CD8-positive, alpha-beta T cell (primary cell): ENCODE measurements at regions of chr17 and their contacts with region 1.

Region 1: GRCh38 chr17:75261336-75262111 is at the starts of genes GGA3 and MRPS7:
- DNase-seq: peak; percentile 93 to 98 (median 96)
- ATAC-seq: peak; percentile 94
- H3K4me3 ChIP-seq: peak within 1 kb of the TSS; percentile 89 to 97
- H3K4me3 Mint-ChIP-seq: peak within 1 kb of the TSS; percentile 99
- H3K27ac ChIP-seq: peak within 1 kb of the TSS; percentile 98 to 100
- H3K27ac Mint-ChIP-seq: peak within 1 kb of the TSS; percentile 100
- H3K4me1 ChIP-seq: peaks cover 27% of the 10 kb centered on the region
- H3K4me1 Mint-ChIP-seq: peaks cover 47% of the 10 kb centered on the region
- H3K27me3 ChIP-seq: no peaks in the 10 kb centered on the region
- H3K27me3 Mint-ChIP-seq: no peaks in the 10 kb centered on the region
- CTCF ChIP-seq: no peak
- total RNA-seq, gene GGA3: 103 to 107 TPM
- total RNA-seq, gene MRPS7: 42.0 to 43.9 TPM

Region 2: DNA sequence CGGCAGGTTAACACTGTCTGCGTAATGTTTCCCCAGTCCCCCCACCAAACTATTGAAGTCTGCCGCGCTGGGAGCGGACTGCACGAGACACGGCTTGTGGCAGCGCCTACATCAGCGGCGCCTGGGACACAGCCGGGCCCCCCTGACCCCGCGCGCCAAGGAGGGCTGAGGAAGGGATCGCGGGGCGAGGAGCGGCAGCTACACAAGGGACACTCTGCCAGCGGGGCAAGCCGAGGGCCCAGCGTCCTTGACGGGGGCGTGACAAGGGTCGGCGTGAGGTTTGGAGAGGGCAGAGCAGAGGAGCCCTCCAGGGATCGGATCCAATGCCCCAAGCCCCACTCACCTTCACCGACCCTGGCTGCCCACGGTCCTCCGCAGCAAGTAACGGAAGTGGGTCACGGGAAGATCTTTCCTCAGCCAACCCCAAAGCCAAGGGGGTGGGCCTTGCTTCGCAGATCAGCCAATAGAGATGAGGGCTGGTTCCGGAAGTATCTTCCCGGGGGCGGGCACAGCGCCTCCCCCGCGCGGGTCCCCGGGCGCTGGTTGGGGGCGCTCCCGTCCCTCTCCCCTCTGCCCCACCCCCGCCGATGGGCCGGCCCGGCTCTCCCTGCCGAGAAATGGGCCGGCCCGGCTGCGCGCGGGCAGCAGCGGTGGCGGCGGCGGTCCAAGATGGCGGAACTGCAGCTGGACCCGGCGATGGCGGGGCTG is 214.8 kb before region 1 on chr17 and contains the starts of genes ATP5PD and KCTD2:
- CTCF ChIA-PET with region 1: no interaction called
- POLR2A ChIA-PET with region 1: interaction called, 3 read pairs
- intact Hi-C with region 1: loop called in 1 of 2 experiments (anchors 10 kb)
- DNase-seq: peak; percentile 81 to 97 (median 93)
- ATAC-seq: peak; percentile 91
- H3K4me3 ChIP-seq: peak within 1 kb of the TSS; percentile 99
- H3K4me3 Mint-ChIP-seq: peak within 1 kb of the TSS; percentile 99
- H3K27ac ChIP-seq: peak within 1 kb of the TSS; percentile 93 to 97
- H3K27ac Mint-ChIP-seq: peak within 1 kb of the TSS; percentile 98
- H3K4me1 ChIP-seq: peaks cover 21% of the 10 kb centered on the region
- H3K4me1 Mint-ChIP-seq: peaks cover 54% of the 10 kb centered on the region
- H3K27me3 ChIP-seq: no peaks in the 10 kb centered on the region
- H3K27me3 Mint-ChIP-seq: no peaks in the 10 kb centered on the region
- CTCF ChIP-seq: no peak
- total RNA-seq, gene ATP5PD: 69.9 to 71.6 TPM
- total RNA-seq, gene KCTD2: 29.4 to 31.7 TPM

Region 3: DNA sequence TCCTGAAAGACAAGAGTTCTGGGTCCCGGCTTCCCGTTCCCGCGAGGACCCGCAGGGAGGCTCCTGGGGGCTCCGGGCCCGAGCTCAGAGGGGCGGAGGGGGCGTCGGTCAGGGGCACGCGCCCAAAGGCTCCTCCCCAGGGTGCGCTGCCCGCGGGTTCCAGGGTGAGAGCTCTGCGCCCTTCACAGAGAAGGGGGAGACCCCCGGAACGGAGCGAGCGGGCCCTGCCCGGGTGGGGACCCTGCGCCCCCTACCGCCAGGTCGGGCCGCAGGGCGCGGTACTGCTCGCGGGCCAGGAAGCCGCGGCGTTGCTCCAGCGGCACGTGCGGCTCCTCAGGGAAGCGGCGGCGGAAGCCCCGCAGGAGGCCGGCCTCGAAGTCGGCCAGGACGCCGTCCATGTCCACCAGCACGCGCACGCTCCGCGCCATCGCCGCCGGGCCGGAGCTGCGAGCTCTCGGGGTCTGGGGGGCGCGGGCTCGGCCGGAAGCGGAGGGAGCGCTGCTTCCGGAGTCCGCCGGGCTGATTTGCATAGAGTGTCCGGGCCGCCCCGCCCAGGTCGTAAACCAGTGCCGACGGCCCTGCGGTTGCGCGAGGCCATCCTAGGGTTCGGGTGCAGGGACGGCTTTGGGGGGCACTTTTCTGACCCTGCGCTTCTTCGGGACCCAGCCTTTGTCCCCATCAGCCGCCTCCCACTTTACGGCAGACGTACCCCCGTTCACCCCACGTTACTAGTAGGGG is 130.1 kb before region 1 on chr17 and contains the start of gene NT5C:
- CTCF ChIA-PET with region 1: no interaction called
- POLR2A ChIA-PET with region 1: no interaction called
- intact Hi-C with region 1: no loop called
- DNase-seq: peak in 8 of 9 experiments; percentile 43 to 82 (median 66)
- ATAC-seq: peak; percentile 79
- H3K4me3 ChIP-seq: peak within 1 kb of the TSS; percentile 80 to 84
- H3K4me3 Mint-ChIP-seq: peak within 1 kb of the TSS; percentile 86
- H3K27ac ChIP-seq: peak within 1 kb of the TSS; percentile 64 to 83
- H3K27ac Mint-ChIP-seq: peak within 1 kb of the TSS; percentile 77
- H3K4me1 ChIP-seq: peaks cover 8% of the 10 kb centered on the region
- H3K4me1 Mint-ChIP-seq: peaks cover 15% of the 10 kb centered on the region
- H3K27me3 ChIP-seq: no peaks in the 10 kb centered on the region
- H3K27me3 Mint-ChIP-seq: no peaks in the 10 kb centered on the region
- CTCF ChIP-seq: peak; percentile 19
- total RNA-seq, gene NT5C: 19.3 to 20.4 TPM

Region 4: DNA sequence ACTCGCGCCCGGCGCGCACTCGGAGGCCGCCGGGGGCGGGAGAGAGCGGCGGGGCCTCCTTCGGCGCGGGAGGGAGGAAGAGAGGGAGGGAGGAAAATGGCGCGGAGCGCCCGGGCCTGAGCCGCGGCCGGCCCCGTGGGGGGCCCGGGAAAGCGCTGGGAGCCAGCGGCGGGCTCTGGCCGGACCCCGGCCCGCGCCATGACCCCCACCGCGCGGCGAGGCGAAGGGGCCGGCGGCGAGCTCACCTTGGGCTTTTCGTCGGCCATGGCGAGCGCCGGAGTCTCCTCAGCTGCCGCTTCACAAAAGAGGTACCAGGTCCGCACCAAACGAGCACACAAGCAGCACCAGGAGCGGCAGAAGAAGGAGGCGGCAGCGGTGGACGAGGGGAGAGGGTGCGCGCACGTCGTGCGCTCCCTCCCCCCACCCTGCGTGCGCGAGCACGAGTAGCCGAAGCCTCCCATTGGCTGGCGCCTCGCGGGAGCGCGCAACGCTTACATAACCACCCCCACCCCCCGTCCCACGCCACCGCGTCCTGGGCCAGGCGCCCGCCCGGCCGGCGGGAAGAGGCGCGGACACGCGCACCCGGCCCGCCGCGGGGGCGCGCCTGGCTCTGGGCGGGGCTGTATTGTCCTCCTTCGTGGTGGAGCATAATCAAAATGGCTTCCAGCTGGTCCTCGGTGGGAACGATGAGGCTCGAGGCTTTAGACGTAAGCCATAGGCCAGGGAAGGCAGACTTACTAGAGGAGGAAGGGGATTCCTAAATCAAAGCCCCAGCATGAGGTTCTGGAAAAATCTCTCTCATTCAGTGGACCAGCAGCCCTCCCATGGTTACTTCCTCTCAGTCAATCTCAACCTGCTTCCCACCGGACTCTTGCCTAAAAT is 78.7 kb before region 1 on chr17 and contains the start of gene SUMO2:
- CTCF ChIA-PET with region 1: no interaction called
- POLR2A ChIA-PET with region 1: interaction called, 3 read pairs
- intact Hi-C with region 1: loop called (anchors 1 to 2 kb)
- DNase-seq: peak; percentile 89 to 98 (median 95)
- ATAC-seq: peak; percentile 77
- H3K4me3 ChIP-seq: peak within 1 kb of the TSS; percentile 68 to 82
- H3K4me3 Mint-ChIP-seq: peak within 1 kb of the TSS; percentile 92
- H3K27ac ChIP-seq: peak within 1 kb of the TSS; percentile 95
- H3K27ac Mint-ChIP-seq: peak within 1 kb of the TSS; percentile 98
- H3K4me1 ChIP-seq: peaks cover 28% of the 10 kb centered on the region
- H3K4me1 Mint-ChIP-seq: peaks cover 46% of the 10 kb centered on the region
- H3K27me3 ChIP-seq: no peaks in the 10 kb centered on the region
- H3K27me3 Mint-ChIP-seq: no peaks in the 10 kb centered on the region
- CTCF ChIP-seq: no peak
- total RNA-seq, gene SUMO2: 192 to 203 TPM

Region 5: DNA sequence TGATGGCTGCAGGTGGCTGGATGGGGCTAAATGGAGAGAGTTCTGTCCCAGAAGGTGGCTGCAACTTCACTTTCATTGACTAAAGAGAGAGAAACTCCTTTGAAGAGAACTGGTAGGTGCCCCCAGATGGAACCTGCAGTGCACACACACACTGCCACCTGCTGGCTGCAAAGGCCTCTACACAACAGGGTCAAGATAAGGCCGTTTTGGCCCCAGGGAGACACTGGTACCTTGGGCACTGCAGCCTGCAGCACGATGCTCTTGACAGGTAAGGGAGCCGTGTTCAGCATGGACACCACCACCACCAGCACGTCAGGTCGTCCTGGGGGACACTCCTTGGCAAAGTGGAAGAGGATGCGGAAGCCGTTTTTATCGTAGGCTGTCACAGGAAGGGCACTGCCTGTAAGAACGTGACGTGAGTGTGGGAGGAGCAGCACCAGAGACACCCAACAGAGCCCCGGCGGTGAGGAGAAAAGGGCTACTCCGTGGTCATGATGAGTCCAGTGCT is 22.8 kb before region 1 on chr17:
- CTCF ChIA-PET with region 1: interaction called, 6 read pairs
- POLR2A ChIA-PET with region 1: interaction called, 5 read pairs
- intact Hi-C with region 1: loop called in 1 of 2 experiments (anchors 2 kb)
- DNase-seq: peak; percentile 24 to 78 (median 63)
- ATAC-seq: peak; percentile 47
- H3K4me3 ChIP-seq: no peak overlapping the region
- H3K4me3 Mint-ChIP-seq: no peak overlapping the region
- H3K27ac ChIP-seq: no peak overlapping the region
- H3K27ac Mint-ChIP-seq: peak overlapping the region; percentile 58
- H3K4me1 ChIP-seq: peaks cover 6% of the 10 kb centered on the region
- H3K4me1 Mint-ChIP-seq: peaks cover 24% of the 10 kb centered on the region
- H3K27me3 ChIP-seq: no peaks in the 10 kb centered on the region
- H3K27me3 Mint-ChIP-seq: no peaks in the 10 kb centered on the region
- CTCF ChIP-seq: peak; percentile 86

Region 6: DNA sequence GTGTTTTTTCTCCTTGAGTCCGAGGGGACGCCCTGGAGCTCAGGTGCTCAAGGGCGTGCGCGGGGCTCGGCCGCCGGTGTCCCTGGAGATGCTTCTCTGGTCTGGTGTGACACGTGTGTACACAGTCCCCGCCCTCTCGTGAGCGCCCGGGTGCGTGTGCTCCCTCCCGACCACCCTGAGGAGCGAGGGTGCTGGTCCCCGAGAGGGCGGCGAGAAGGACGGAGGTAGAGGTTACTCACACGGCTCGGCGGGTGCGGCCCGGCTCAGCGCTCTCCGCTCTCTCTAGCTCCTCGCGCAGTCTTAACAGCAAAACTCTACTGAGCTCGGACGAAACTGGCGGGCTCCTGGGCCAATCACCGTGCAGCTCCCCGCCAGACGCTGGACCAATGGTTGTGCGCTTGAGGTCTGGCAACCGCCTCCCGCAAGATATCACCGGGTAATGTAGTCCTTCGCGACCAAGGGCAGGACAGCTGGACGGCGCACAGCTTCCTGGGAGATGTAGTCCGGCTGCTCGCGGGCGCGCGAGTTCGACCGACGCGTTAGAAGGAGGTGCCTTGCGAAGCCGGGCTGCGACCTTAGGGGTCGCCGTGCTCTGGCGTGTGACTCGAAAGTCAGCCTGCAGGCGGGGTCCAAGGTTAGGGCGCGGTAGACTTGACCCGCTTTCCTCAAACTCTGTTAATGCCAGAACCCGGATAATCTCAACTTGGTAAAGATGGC is 27.7 kb after region 1 on chr17 and contains the start of gene SLC25A19:
- CTCF ChIA-PET with region 1: interaction called, 6 read pairs
- POLR2A ChIA-PET with region 1: interaction called, 42 read pairs
- intact Hi-C with region 1: loop called in 1 of 2 experiments (anchors 1 kb)
- DNase-seq: peak; percentile 90 to 99 (median 96)
- ATAC-seq: peak; percentile 88
- H3K4me3 ChIP-seq: peak within 1 kb of the TSS; percentile 70 to 77
- H3K4me3 Mint-ChIP-seq: peak within 1 kb of the TSS; percentile 97
- H3K27ac ChIP-seq: peak within 1 kb of the TSS; percentile 95 to 97
- H3K27ac Mint-ChIP-seq: peak within 1 kb of the TSS; percentile 100
- H3K4me1 ChIP-seq: peaks cover 16% of the 10 kb centered on the region
- H3K4me1 Mint-ChIP-seq: peaks cover 16% of the 10 kb centered on the region
- H3K27me3 ChIP-seq: no peaks in the 10 kb centered on the region
- H3K27me3 Mint-ChIP-seq: no peaks in the 10 kb centered on the region
- CTCF ChIP-seq: no peak
- total RNA-seq, gene SLC25A19: 14.4 to 14.8 TPM

Region 7: DNA sequence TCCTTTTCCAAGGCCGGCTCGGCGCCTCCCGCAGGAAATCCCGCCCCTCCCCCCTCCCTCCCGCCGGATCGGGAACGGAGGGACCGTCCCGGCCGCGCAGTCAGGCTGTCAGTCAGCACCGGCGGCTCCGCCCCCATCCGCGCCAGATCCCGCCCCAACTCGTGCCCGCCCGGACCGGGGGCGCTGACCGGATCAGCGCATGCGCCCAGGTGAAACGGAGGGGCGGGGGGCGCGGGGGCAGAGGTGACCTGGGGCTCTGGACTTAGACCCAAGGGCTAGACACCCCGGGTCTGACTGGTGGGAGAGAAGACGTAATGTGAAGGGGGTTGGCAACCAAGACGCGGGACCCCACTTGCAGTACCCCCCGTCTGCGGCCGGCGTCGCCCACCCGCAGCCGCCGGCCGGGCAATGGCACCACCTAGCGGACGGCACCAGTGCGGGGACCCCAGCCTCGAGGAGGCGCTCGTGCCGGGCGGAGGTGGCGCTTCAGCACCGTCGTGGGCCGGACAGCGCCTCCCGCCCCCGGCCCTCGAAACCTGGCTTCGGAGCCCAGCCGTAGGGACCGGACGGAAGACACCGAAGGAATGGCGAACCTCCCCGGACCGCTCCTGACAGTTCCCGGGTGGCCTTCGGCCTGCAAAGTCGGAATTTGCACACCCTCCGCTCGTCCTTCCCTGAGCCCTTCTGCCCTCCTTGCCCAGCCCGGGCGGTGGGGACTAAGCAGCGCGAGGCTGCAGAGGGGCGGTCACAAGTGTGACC is 254.2 kb after region 1 on chr17 and contains the start of gene CASKIN2:
- CTCF ChIA-PET with region 1: interaction called, 3 read pairs
- POLR2A ChIA-PET with region 1: interaction called, 3 read pairs
- intact Hi-C with region 1: loop called in 1 of 2 experiments (anchors 1 kb)
- DNase-seq: peak; percentile 56 to 89 (median 80)
- ATAC-seq: peak; percentile 59
- H3K4me3 ChIP-seq: peak within 1 kb of the TSS; percentile 79 to 97
- H3K4me3 Mint-ChIP-seq: peak within 1 kb of the TSS; percentile 77
- H3K27ac ChIP-seq: peak within 1 kb of the TSS in 1 of 2 experiments; percentile 32
- H3K27ac Mint-ChIP-seq: no peak within 1 kb of the TSS
- H3K4me1 ChIP-seq: peaks cover 35% of the 10 kb centered on the region
- H3K4me1 Mint-ChIP-seq: peaks cover 26% of the 10 kb centered on the region
- H3K27me3 ChIP-seq: no peaks in the 10 kb centered on the region
- H3K27me3 Mint-ChIP-seq: no peaks in the 10 kb centered on the region
- CTCF ChIP-seq: peak; percentile 99
- total RNA-seq, gene CASKIN2: 0.64 to 0.98 TPM

Region 8: GRCh38 chr17:75784473-75785015 is 523.0 kb after region 1 on chr17 and contains the start of gene UNK:
- CTCF ChIA-PET with region 1: no interaction called
- POLR2A ChIA-PET with region 1: no interaction called
- intact Hi-C with region 1: loop called in 1 of 2 experiments (anchors 10 kb)
- DNase-seq: peak; percentile 91 to 99 (median 96)
- ATAC-seq: peak; percentile 64
- H3K4me3 ChIP-seq: peak within 1 kb of the TSS; percentile 57 to 78
- H3K4me3 Mint-ChIP-seq: peak within 1 kb of the TSS; percentile 93
- H3K27ac ChIP-seq: peak within 1 kb of the TSS; percentile 95 to 100
- H3K27ac Mint-ChIP-seq: peak within 1 kb of the TSS; percentile 98
- H3K4me1 ChIP-seq: peaks cover 39% of the 10 kb centered on the region
- H3K4me1 Mint-ChIP-seq: peaks cover 49% of the 10 kb centered on the region
- H3K27me3 ChIP-seq: no peaks in the 10 kb centered on the region
- H3K27me3 Mint-ChIP-seq: no peaks in the 10 kb centered on the region
- CTCF ChIP-seq: no peak
- total RNA-seq, gene UNK: 37.3 to 42.8 TPM